Gastrocnemius medialis (tissue), 4 donors: ENCODE measurements at regions of chr7 and their contacts with region 1.

Region 1: DNA sequence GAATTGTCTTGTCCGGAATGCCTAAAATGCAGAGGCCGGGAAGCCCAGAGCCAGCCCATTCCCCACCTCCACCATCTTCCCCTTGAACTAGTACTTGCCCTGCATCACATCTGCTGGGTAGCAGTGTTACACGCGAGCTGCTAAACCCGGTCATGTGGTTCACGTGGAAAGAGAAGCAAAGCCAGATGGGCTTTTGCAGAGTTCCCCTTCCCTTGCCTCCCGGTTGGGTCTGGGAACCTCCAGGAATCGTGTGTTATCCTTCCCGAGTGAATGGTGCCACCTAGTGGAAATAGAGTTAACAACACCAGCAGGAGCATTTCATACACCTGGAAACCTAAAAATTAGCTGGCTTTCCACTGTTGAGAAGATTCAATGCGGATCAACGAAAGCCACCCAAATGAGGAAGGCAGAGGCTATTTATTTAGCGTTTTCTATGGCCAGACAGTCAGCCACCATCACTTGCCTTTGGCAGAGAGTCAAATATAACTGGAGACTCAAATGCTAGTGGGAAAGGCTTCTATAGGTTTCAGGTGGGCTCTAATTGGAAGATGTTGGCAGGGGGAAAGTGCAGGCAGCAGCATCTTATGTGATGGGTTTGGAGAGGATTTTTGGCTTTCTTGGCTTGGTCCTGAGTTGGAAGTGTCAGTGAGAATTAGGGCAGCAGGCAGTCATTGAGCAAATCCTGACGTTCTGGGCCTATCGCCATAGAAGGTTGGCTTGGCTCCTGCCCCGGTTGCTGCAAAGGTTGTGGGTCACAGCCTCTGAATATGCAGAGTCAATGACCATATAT is 12.9 kb upstream of the DENND2A start:
- DNase-seq: peak; percentile 46 to 48
- ATAC-seq: peak; percentile 71 to 75
- H3K4me3 ChIP-seq: no peak overlapping the region
- H3K27ac ChIP-seq: peak overlapping the region in 2 of 4 donors; percentile 27 to 35
- H3K4me1 ChIP-seq: peaks cover 23% of the 10 kb centered on the region in 2 donors
- H3K27me3 ChIP-seq: no peaks in the 10 kb centered on the region
- CTCF ChIP-seq: peak; percentile 81 to 94 (median 88)
- POLR2A ChIP-seq: no peak

Region 2: GRCh38 chr7:139582671-139583155 is 1070.8 kb before region 1 on chr7:
- in situ Hi-C with region 1: no loop called
- intact Hi-C with region 1: no loop called
- DNase-seq: no peak
- ATAC-seq: no peak
- H3K4me3 ChIP-seq: no peak overlapping the region
- H3K27ac ChIP-seq: no peak overlapping the region
- H3K4me1 ChIP-seq: no peaks in the 10 kb centered on the region
- H3K27me3 ChIP-seq: no peaks in the 10 kb centered on the region
- CTCF ChIP-seq: no peak
- POLR2A ChIP-seq: no peak

Region 3: GRCh38 chr7:140517546-140518369 is 135.8 kb before region 1 on chr7:
- in situ Hi-C with region 1: loop called (anchors 5 to 10 kb)
- intact Hi-C with region 1: loop called (anchors 1 kb)
- DNase-seq: peak; percentile 74 to 83
- ATAC-seq: peak; percentile 86 to 95
- H3K4me3 ChIP-seq: no peak overlapping the region
- H3K27ac ChIP-seq: peak overlapping the region; percentile 4 to 54 (median 42)
- H3K4me1 ChIP-seq: peaks cover 0 to 3% of the 10 kb centered on the region in 2 donors
- H3K27me3 ChIP-seq: no peaks in the 10 kb centered on the region
- CTCF ChIP-seq: peak; percentile 73 to 89 (median 85)
- POLR2A ChIP-seq: no peak